ENCODE measurements at regions of chr1 and their contacts with region 1.

Region 1: DNA sequence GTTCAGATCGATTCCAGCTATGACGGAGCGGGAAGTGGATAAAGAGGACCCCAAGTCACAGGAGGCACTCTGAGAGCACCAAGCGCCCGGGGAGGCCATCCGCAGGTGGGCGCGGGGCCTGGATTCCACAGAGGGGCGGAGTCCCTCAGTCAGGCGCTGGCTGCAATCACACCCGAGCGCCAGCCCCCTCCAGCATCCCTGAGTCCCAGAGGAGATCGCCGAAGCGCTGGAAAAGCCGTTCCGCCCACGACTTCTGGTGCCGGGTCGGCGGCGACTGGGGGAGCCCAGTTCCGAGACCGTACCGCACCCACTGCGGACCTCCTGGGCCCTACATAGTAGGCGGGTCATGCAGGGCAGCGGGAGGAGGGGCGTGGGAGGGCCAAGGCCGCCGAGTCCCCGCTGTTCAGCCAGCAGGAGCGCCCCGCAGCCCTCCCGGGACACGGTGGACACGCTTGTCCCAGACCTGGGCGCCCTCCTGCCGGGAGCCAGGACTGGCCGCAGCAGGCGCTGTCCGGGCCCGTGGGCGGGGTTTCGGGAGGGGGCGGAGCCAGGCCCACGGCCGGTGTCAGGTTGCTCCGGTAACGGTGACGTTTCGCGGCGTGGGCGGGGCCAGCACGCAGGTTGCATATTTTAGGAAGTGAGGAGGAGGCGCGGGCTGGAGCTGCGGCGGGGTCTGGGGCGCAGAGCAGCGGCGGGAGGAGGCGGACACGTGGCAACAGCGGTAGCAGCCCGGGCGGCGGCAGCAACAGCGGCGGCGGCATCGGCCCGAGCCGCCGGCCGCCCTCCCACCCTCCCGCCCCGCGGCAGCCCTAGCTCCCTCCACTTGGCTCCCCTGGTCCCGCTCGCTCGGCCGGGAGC is at the start of gene ATP1A1:
- DNase-seq: peak; percentile 97
- H3K4me3 ChIP-seq: peak within 1 kb of the TSS; percentile 91
- H3K27ac ChIP-seq: peak within 1 kb of the TSS; percentile 97
- H3K4me1 ChIP-seq: peaks cover 48% of the 10 kb centered on the region
- H3K27me3 ChIP-seq: no peaks in the 10 kb centered on the region
- CTCF ChIP-seq: no peak; the same call in 1 of the 2 replicates
- total RNA-seq, gene ATP1A1: 1,293 and 1,420 TPM in 2 replicates

Region 2: GRCh38 chr1:116202934-116203723 is 169.7 kb before region 1 on chr1:
- CTCF ChIA-PET with region 1: interaction called, 18 read pairs
- POLR2A ChIA-PET with region 1: no interaction called
- intact Hi-C with region 1: no loop called
- DNase-seq: no peak
- H3K4me3 ChIP-seq: no peak overlapping the region
- H3K27ac ChIP-seq: no peak overlapping the region
- H3K4me1 ChIP-seq: peaks cover 5% of the 10 kb centered on the region
- H3K27me3 ChIP-seq: no peaks in the 10 kb centered on the region
- CTCF ChIP-seq: no peak

Region 3: GRCh38 chr1:116332451-116332850 is 40.4 kb before region 1 on chr1:
- CTCF ChIA-PET with region 1: interaction called, 11 read pairs
- POLR2A ChIA-PET with region 1: no interaction called
- intact Hi-C with region 1: no loop called
- DNase-seq: no peak
- H3K4me3 ChIP-seq: no peak overlapping the region
- H3K27ac ChIP-seq: no peak overlapping the region
- H3K4me1 ChIP-seq: peaks cover 22% of the 10 kb centered on the region
- H3K27me3 ChIP-seq: no peaks in the 10 kb centered on the region
- CTCF ChIP-seq: no peak